ENCODE measurements at regions of chr6 and their contacts with region 1.

Region 1: GRCh38 chr6:42075159-42075838 is 25.0 kb downstream of the TAF8 start:
- DNase-seq: peak; percentile 54 to 87 (median 80)
- ATAC-seq: peak; percentile 96
- H3K4me3 ChIP-seq: no peak overlapping the region
- H3K27ac ChIP-seq: no peak overlapping the region
- H3K4me1 ChIP-seq: peaks cover 0 to 3% of the 10 kb centered on the region in 2 donors
- H3K27me3 ChIP-seq: no peaks in the 10 kb centered on the region
- CTCF ChIP-seq: peak; percentile 69 to 80

Region 2: DNA sequence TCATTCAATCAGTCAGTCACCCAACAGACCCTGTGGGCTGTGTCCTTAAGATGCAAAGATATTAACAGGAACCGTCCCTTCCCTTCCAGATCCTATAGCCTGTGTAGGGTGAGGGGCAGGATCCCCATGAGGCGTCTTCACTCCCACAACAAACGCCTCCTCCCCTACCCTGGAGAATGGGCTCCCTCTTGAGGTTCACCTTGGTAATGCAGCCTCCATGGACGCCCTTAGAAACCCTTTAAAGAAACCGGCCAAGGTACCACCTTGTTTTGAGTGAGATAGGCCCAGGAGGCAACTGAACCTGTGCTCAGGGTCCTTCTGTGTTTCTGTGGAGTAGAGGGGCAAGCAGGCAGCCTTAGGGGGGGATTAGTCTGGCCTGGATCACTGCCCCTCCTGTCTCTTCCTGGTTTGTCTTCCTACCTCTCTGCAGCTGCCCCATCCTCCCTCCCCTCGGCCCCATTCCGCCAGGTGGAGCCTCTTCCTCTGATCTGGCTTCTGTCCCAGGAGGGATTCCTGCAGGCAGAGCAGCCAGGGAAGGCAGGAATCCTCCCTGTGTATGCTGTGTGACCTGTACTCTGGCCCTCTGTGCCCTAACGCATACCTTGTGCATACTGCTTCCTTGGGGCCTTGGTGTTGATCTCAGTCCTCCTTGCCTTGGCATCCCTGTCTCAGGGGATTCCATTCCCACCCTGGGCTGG is 91.3 kb after region 1 on chr6:
- intact Hi-C with region 1: loop called in 1 of 2 experiments (anchors 2 kb)
- DNase-seq: peak in 3 of 4 donors; percentile 38 to 76 (median 46)
- ATAC-seq: peak; percentile 97
- H3K4me3 ChIP-seq: no peak overlapping the region
- H3K27ac ChIP-seq: no peak overlapping the region
- H3K4me1 ChIP-seq: no peaks in the 10 kb centered on the region
- H3K27me3 ChIP-seq: no peaks in the 10 kb centered on the region
- CTCF ChIP-seq: peak; percentile 92 to 96

Region 3: GRCh38 chr6:42190554-42191183 is 115.4 kb after region 1 on chr6:
- intact Hi-C with region 1: no loop called
- DNase-seq: no peak
- ATAC-seq: no peak
- H3K4me3 ChIP-seq: no peak overlapping the region
- H3K27ac ChIP-seq: no peak overlapping the region
- H3K4me1 ChIP-seq: no peaks in the 10 kb centered on the region
- H3K27me3 ChIP-seq: no peaks in the 10 kb centered on the region
- CTCF ChIP-seq: no peak

Region 4: GRCh38 chr6:42217519-42218367 is 142.4 kb after region 1 on chr6 and contains the start of gene MRPS10:
- intact Hi-C with region 1: loop called in 1 of 2 experiments (anchors 10 kb)
- DNase-seq: peak; percentile 87 to 94 (median 94)
- ATAC-seq: peak; percentile 100
- H3K4me3 ChIP-seq: peak within 1 kb of the TSS; percentile 80 to 86
- H3K27ac ChIP-seq: peak within 1 kb of the TSS; percentile 66 to 75
- H3K4me1 ChIP-seq: peaks cover 4 to 30% of the 10 kb centered on the region in 2 donors
- H3K27me3 ChIP-seq: no peaks in the 10 kb centered on the region
- CTCF ChIP-seq: no peak
- polyA plus RNA-seq, gene MRPS10: 24.5 to 36.0 (median 30.9) TPM